ENCODE measurements at regions of chr2 and their contacts with region 1.

Region 1: DNA sequence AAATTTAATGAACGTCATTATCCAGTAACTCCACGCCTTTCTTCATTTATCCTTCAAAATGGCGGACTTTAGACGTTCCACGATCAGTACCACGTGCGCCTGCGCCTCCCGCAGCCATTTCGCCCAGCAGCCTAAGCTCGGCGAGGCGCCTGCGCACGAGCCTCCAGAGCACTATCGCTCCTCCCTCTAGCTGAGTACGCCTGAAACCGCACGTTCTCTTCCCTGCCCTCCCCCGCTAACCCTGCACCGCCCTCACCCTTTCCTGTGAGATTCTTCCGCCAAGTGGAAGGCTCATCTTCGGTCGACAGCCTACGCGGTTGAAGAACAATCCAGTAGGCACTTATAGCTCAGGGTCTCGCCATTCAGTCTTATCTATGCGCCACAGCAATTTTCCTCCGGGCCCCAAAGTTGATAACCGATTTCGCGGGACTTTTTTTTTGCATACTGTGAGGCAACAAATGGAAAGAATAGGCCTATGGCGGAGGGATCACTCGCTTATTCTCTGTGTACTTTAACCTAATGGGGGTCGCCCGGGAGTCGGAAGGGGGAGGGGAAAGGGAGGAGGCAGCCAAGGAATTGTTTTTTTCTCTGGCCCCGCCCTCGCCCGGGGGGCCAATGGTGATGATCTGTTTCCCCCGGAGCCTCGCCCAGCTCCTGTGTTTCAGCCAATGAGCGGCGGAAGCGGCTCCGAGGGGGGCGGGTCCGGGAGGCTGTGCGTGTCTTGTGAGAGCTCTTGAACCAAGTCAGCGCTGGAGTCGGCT is at the start of gene KDM3A:
- DNase-seq: peak; percentile 97 to 100 (median 99)
- ATAC-seq: peak; percentile 82
- H3K4me3 Mint-ChIP-seq: peak within 1 kb of the TSS; percentile 92 to 99 (median 98)
- H3K27ac Mint-ChIP-seq: peak within 1 kb of the TSS; percentile 98 to 100 (median 99)
- H3K4me1 Mint-ChIP-seq: peaks cover 29 to 53% (median 46%) of the 10 kb centered on the region in 4 donors
- H3K27me3 Mint-ChIP-seq: peaks cover 0 to 1% (median 0%) of the 10 kb centered on the region in 5 donors
- polyA plus RNA-seq, gene KDM3A: 12.6 to 30.4 (median 17.5) TPM

Region 2: DNA sequence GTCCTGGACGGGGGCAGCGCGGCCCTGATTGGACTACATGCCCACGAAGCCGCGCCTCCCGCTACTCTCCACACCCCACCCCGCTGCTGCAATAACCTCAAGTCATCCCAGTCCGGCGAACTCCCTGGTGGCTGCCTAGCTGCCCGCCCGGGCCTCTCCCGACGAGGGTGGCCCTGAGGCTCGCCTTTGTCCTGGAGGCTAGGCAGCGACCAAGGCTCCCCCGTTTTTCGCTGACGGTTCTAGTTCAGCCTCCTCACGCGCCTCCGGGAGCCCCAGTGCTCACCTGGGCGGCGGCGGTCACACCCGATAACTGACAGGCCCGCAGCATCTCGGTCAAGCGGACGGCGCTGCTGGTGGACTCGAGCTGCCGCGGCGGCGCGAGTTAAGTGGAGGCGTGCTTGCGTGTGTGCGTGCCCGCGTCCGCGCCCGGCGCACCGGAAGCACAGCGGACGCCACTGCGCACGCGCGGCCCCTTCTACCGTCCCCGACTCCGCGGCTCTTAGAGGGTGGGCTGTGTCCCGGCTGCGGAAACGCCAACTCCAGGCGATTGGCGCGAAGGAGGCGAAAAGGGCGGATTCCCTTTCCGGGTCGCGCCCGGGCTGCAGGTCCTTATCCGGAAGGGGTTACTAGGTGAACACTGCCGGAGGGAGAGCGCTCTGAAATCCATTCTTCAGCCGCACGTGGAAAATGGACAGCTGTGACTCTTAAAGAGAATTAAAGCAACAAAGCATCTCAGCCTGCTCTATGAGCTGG is 245.6 kb before region 1 on chr2 and contains the start of gene IMMT:
- POLR2A ChIA-PET with region 1: interaction called, 28 read pairs
- DNase-seq: peak; percentile 88 to 97 (median 92)
- ATAC-seq: peak; percentile 89 to 90
- H3K4me3 Mint-ChIP-seq: peak within 1 kb of the TSS; percentile 84 to 98 (median 93)
- H3K27ac Mint-ChIP-seq: peak within 1 kb of the TSS; percentile 89 to 98 (median 96)
- H3K4me1 Mint-ChIP-seq: peaks cover 21 to 69% (median 60%) of the 10 kb centered on the region in 4 donors
- H3K27me3 Mint-ChIP-seq: no peaks in the 10 kb centered on the region
- polyA plus RNA-seq, gene IMMT: 47.5 to 71.9 (median 61.4) TPM

Region 3: GRCh38 chr2:86368161-86368824 is 72.5 kb before region 1 on chr2:
- POLR2A ChIA-PET with region 1: interaction called, 74 read pairs
- DNase-seq: peak in 9 of 10 donors; percentile 6 to 69 (median 34)
- ATAC-seq: peak; percentile 66 to 69
- H3K4me3 Mint-ChIP-seq: peak overlapping the region; percentile 48 to 83 (median 69)
- H3K27ac Mint-ChIP-seq: peak overlapping the region in 9 of 10 donors; percentile 20 to 84 (median 77)
- H3K4me1 Mint-ChIP-seq: peaks cover 28 to 65% (median 49%) of the 10 kb centered on the region in 4 donors
- H3K27me3 Mint-ChIP-seq: no peaks in the 10 kb centered on the region

Region 4: GRCh38 chr2:86562922-86563649 is 122.3 kb after region 1 on chr2 and contains the start of gene CHMP3:
- POLR2A ChIA-PET with region 1: interaction called, 10 read pairs
- DNase-seq: peak; percentile 92 to 98 (median 98)
- ATAC-seq: peak; percentile 84 to 85
- H3K4me3 Mint-ChIP-seq: peak within 1 kb of the TSS; percentile 90 to 98 (median 96)
- H3K27ac Mint-ChIP-seq: peak within 1 kb of the TSS; percentile 95 to 100 (median 99)
- H3K4me1 Mint-ChIP-seq: peaks cover 23 to 37% (median 28%) of the 10 kb centered on the region in 4 donors
- H3K27me3 Mint-ChIP-seq: peaks cover 0 to 7% (median 0%) of the 10 kb centered on the region in 5 donors
- polyA plus RNA-seq, gene CHMP3: 68.5 to 70.9 (median 70.6) TPM

Region 5: DNA sequence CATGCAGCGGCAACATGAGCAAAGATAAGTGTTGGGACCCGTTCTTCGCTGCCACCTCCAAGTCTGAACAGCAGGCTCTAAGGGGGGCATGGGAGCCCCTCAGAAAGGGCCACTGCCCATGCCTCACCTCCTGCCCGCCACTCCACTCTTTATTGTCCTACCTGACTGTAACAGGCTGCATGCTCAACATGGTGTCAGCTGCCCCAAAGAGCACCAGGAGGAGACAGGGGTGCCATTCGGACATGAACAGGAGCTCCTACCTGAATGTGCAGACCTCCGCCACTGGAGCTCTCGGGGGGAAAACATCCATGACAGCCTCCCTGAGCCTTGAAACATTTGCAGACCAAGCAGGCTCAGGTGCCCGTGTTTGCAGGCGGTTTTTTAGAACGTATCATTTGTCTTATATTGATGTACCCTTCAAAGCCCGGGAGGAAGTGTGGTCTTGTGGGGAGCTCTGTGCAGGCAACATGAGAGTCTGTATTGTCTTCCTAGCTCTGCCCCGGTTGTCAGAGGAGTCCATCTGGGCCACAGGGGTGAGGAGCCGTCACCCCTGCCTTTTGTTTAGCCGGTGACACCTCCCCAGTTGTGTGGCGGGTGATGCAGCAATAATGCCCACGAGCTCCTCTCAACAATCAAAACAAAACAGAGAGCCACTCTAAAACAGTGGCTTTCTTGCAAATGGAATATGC is 385.0 kb after region 1 on chr2:
- POLR2A ChIA-PET with region 1: interaction called, 29 read pairs
- DNase-seq: peak; percentile 54 to 96 (median 88)
- ATAC-seq: peak; percentile 77 to 89
- H3K4me3 Mint-ChIP-seq: peak overlapping the region; percentile 86 to 99 (median 95)
- H3K27ac Mint-ChIP-seq: peak overlapping the region; percentile 85 to 99 (median 96)
- H3K4me1 Mint-ChIP-seq: peaks cover 45 to 81% (median 71%) of the 10 kb centered on the region in 4 donors
- H3K27me3 Mint-ChIP-seq: no peaks in the 10 kb centered on the region

Measured in naive thymus-derived CD8-positive, alpha-beta T cell (primary cell).